GM10248 (cell line): ENCODE measurements at regions of chr3 and their contacts with region 1.

Region 1: GRCh38 chr3:23888617-23889228 is 28.1 kb downstream of the NKIRAS1 start:
- DNase-seq: no peak
- CTCF ChIP-seq: peak; percentile 59

Region 2: GRCh38 chr3:23834082-23834870 is 54.4 kb before region 1 on chr3:
- CTCF ChIA-PET with region 1: interaction called, 10 read pairs
- POLR2A ChIA-PET with region 1: no interaction called
- DNase-seq: no peak
- CTCF ChIP-seq: peak; percentile 36

Region 3: DNA sequence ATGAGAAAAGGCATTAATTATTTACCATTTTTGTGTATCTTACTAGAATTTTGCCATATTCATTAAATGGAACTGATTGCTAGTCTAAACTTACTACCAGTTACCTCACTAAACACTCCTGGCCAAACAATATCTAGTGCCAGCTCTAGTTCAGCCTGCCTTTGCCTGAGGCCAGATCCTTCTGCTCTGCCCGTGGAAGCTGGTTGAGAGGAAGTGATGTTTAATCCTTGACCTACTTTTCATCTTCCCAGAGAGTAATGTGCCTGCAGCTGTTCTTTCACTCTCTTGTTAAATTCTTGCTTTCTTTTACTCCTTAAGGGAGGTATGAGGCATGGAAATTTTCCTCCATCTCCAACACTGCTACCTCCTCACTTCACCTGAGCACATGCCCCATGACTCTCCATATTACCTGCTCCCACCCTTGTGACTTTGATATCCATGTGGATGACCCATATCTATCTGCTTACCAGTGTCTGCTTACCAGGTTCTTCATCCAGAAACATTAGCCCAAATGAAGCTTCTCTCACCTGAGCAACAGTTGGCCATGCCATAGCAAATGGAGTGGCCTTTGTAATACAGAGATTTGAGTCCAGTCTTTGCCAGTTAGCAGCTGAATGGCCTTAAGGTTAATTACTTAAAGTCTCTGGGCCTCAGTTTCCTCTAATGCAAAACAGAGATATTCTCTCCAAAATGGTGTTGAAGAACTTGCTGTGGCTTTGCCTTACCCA is 29.5 kb before region 1 on chr3:
- CTCF ChIA-PET with region 1: interaction called, 12 read pairs
- POLR2A ChIA-PET with region 1: no interaction called
- DNase-seq: no peak
- CTCF ChIP-seq: no peak

Region 4: DNA sequence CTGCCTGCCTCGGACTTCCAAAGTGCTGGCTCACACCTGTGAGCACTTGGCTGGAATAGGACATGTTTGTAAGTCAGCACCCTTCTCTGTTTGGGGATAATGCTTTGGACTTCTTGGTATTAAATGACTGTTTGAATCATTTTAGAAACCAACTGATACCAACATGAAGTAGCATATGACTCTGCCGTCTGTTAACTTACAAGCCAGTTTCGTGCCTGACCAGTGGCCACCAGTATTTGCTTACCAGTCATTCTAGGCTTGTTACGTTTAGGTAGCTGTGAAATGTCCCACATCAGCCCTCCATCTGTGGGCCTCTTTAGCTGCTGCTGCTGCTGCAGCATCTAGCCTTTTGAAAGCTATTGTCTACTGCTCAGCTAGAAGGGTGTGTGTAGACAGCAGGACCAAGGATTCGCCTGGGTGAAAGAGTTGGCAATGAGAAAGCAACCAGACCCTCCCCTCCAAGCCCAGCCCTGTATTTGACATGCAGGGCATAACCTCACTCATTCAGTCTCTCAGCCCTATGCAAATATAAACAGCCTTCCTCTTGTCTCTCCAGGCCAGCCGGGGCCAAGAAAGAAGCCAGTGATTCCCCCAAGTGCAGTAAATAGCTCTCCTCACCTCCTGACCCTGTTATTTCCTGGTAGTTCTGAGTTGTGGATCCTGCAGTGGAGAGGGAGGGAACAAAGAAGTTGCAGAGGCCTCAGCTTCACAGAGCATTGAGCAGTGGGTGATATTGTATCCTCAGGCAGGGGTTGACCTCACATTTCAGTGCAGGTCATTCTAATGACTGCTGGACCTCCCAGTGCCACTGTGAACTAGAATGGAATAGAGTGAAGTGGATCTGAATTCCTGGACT is 22.9 kb before region 1 on chr3:
- CTCF ChIA-PET with region 1: interaction called, 12 read pairs
- POLR2A ChIA-PET with region 1: no interaction called
- DNase-seq: peak; percentile 48
- CTCF ChIP-seq: no peak

Region 5: DNA sequence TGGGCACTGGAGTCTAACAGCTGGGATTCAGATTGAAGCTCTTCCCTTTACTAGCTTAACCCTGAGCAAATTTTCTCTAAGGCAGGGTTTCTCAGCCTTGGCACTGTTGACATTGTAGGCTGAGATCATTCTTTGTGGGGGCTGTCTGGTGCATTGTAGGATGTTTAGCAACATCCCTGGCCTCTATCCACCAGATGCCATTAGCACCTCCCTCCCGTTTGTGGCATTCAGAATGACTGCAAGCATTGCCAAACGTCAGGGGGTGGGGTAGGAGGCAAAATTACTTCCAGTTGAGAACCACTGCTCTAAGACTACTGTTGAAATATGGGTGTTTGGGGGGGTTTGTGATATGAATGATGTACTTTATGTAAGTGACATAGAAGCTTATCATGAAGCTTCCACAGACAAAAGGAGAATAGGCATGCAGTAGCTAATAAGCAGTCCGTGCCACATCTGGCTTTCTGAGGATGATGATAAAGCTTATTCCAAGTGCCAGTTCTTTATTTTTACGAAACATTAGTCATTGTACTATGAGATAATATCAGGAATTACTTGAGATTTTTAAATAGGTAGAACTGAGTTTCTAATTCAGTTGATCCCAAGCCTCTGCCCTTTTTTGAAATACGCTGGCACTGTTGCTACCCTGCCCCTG is 11.3 kb before region 1 on chr3:
- CTCF ChIA-PET with region 1: interaction called, 33 read pairs
- POLR2A ChIA-PET with region 1: no interaction called
- DNase-seq: no peak
- CTCF ChIP-seq: no peak

Region 6: DNA sequence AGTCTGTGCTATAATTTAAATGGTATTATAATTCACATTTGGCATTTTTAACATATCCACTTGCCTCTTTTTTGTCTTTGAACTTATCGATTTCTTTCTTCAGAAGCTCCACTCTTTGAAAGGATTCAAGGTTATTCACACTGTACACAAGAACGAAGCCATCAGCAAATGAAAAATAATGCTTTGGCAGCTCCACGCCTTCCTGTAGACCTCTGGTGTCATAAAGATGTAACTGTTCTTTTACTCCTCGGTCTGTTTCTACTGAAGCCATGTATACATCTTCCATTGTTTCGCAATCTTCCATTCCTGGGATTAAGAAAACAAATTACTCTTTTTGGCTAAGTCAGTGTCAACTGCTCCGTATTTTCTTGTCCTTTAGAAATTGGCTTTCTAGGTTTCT is 12.0 kb after region 1 on chr3:
- CTCF ChIA-PET with region 1: interaction called, 31 read pairs
- POLR2A ChIA-PET with region 1: no interaction called
- DNase-seq: no peak
- CTCF ChIP-seq: no peak